ENCODE measurements at regions of chr1 and their contacts with region 1.

Region 1: GRCh38 chr1:200819726-200820125 is 53.1 kb upstream of the GPR25 start:
- DNase-seq: no peak
- H3K4me3 ChIP-seq: no peak overlapping the region
- H3K27ac ChIP-seq: no peak overlapping the region
- H3K4me1 ChIP-seq: no peaks in the 10 kb centered on the region
- H3K27me3 ChIP-seq: no peaks in the 10 kb centered on the region
- CTCF ChIP-seq: no peak
- EP300 ChIP-seq: no peak
- POLR2A ChIP-seq: no peak

Region 2: GRCh38 chr1:200866521-200866920 is 46.8 kb after region 1 on chr1:
- in situ Hi-C with region 1: no loop called
- intact Hi-C with region 1: loop called (anchors 2 kb)
- DNase-seq: peak; percentile 43
- H3K4me3 ChIP-seq: no peak overlapping the region
- H3K27ac ChIP-seq: no peak overlapping the region
- H3K4me1 ChIP-seq: no peaks in the 10 kb centered on the region
- H3K27me3 ChIP-seq: peaks cover 25% of the 10 kb centered on the region
- CTCF ChIP-seq: no peak
- EP300 ChIP-seq: no peak
- POLR2A ChIP-seq: no peak

Measured in transverse colon (tissue), 4 donors.